ENCODE measurements at regions of chr22 and their contacts with region 1.

Region 1: DNA sequence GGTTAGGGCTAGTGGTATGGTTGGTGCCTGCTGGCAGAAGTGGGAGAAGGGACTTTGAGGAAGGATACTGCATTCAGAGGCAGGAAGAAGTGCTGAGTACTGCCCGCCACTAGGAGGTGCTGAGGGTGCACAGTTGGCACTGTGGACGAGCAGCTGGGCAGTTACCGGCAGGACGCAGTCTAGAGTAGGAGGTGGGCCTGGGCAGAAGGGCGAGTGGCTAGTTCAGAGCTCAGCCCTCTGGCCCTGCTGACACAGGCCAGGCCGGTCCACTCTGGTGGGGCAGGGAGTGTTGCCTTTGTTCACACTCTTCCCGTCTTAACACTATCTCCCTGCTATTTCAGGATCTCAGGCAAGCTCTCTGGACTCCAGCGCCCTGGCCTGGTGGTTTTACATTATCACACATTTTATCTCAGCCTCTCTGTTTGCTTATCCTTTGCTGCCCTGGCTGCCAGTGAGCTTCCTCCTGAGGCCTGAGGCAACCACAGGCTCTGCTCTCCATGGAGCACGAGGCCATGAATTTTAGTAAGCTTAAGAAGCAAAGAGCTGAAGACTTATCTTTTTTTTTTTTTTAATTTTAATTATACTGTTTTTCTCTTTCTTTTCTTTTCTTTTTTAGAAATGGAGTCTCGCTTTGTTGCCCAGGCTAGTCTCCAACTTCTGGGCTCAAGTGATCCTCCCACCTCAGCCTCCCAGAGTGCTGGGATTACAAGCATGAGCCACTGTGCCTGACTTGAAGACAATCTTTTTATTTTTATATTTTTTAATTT is 26.9 kb downstream of the SNAP29 start:
- DNase-seq: peak; percentile 90
- H3K4me3 ChIP-seq: no peak overlapping the region
- H3K27ac ChIP-seq: peak overlapping the region; percentile 72 to 85 (median 78)
- H3K4me1 ChIP-seq: peaks cover 0 to 27% (median 13%) of the 10 kb centered on the region in 4 donors
- H3K27me3 ChIP-seq: no peaks in the 10 kb centered on the region
- CTCF ChIP-seq: peak; percentile 82 to 99 (median 83)
- EP300 ChIP-seq: no peak
- POLR2A ChIP-seq: peak; percentile 49

Region 2: GRCh38 chr22:20783844-20784723 is 101.7 kb before region 1 on chr22:
- in situ Hi-C with region 1: no loop called
- intact Hi-C with region 1: no loop called
- DNase-seq: peak; percentile 31
- H3K4me3 ChIP-seq: no peak overlapping the region
- H3K27ac ChIP-seq: no peak overlapping the region
- H3K4me1 ChIP-seq: no peaks in the 10 kb centered on the region
- H3K27me3 ChIP-seq: no peaks in the 10 kb centered on the region
- CTCF ChIP-seq: peak; percentile 48 to 69 (median 52)
- EP300 ChIP-seq: no peak
- POLR2A ChIP-seq: no peak

Region 3: GRCh38 chr22:20957316-20958101 is 71.8 kb after region 1 on chr22:
- in situ Hi-C with region 1: no loop called
- intact Hi-C with region 1: loop called (anchors 5 kb)
- DNase-seq: peak; percentile 82
- H3K4me3 ChIP-seq: peak overlapping the region; percentile 54 to 75 (median 64)
- H3K27ac ChIP-seq: peak overlapping the region; percentile 86 to 93 (median 89)
- H3K4me1 ChIP-seq: peaks cover 9 to 55% (median 39%) of the 10 kb centered on the region in 4 donors
- H3K27me3 ChIP-seq: no peaks in the 10 kb centered on the region
- CTCF ChIP-seq: peak in 1 of 5 experiments; percentile 20
- EP300 ChIP-seq: no peak
- POLR2A ChIP-seq: peak; percentile 75

Region 4: GRCh38 chr22:21098099-21098671 is 212.4 kb after region 1 on chr22:
- in situ Hi-C with region 1: loop called in 1 of 4 experiments (anchors 25 kb)
- intact Hi-C with region 1: no loop called
- DNase-seq: no peak
- H3K4me3 ChIP-seq: no peak overlapping the region
- H3K27ac ChIP-seq: no peak overlapping the region
- H3K4me1 ChIP-seq: no peaks in the 10 kb centered on the region
- H3K27me3 ChIP-seq: peaks cover 7% of the 10 kb centered on the region
- CTCF ChIP-seq: no peak
- EP300 ChIP-seq: no peak
- POLR2A ChIP-seq: no peak